IMR-90 (cell line): ENCODE measurements at regions of chr6 and their contacts with region 1.

Region 1: GRCh38 chr6:127302728-127303660 is 36.3 kb downstream of the RNF146 start:
- DNase-seq: peak; percentile 48
- ATAC-seq: peak; percentile 34; the same call in 1 of the 2 replicates
- H3K4me3 ChIP-seq: no peak overlapping the region
- H3K27ac ChIP-seq: no peak overlapping the region
- H3K4me1 ChIP-seq: no peaks in the 10 kb centered on the region; the same call in none of the 2 replicates
- H3K27me3 ChIP-seq: no peaks in the 10 kb centered on the region
- CTCF ChIP-seq: peak; percentile 81
- POLR2A ChIP-seq: no peak
- RAD21 ChIP-seq: peak; percentile 69

Region 2: DNA sequence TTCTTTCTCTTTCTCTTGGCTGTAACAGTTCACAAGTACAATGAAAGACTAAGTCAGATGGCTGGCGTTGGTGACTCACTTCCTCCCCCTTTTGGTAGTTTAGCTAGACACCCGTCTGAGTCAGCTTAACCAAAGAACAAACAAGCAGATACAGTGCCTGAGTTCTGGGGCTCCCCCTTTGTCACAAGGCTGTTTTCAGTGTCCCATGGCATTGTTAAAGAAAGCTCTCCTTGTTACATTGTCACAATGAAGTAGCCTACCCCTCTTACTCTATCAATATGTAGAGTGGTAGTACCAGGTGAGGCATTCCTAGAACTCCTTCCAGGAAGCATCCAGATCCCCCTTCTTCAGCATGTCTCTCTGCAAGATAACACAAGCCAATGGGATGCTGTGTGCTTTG is 117.6 kb after region 1 on chr6:
- CTCF ChIA-PET with region 1: no interaction called
- POLR2A ChIA-PET with region 1: no interaction called
- dilution Hi-C with region 1: no loop called
- in situ Hi-C with region 1: no loop called
- intact Hi-C with region 1: loop called (anchors 1 kb)
- DNase-seq: peak; percentile 97
- ATAC-seq: peak; percentile 98
- H3K4me3 ChIP-seq: no peak overlapping the region
- H3K27ac ChIP-seq: no peak overlapping the region
- H3K4me1 ChIP-seq: peaks cover 3% of the 10 kb centered on the region; the same call in 1 of the 2 replicates
- H3K27me3 ChIP-seq: no peaks in the 10 kb centered on the region
- CTCF ChIP-seq: peak; percentile 55
- POLR2A ChIP-seq: no peak
- RAD21 ChIP-seq: peak; percentile 53

Region 3: GRCh38 chr6:127464881-127465459 is 162.0 kb after region 1 on chr6:
- CTCF ChIA-PET with region 1: no interaction called
- POLR2A ChIA-PET with region 1: no interaction called
- dilution Hi-C with region 1: no loop called
- in situ Hi-C with region 1: loop called (anchors 10 kb)
- intact Hi-C with region 1: loop called (anchors 2 kb)
- DNase-seq: peak; percentile 78
- ATAC-seq: peak; percentile 88
- H3K4me3 ChIP-seq: no peak overlapping the region
- H3K27ac ChIP-seq: no peak overlapping the region
- H3K4me1 ChIP-seq: peaks cover 4% of the 10 kb centered on the region; the same call in 1 of the 2 replicates
- H3K27me3 ChIP-seq: no peaks in the 10 kb centered on the region
- CTCF ChIP-seq: peak; percentile 88
- POLR2A ChIP-seq: no peak
- RAD21 ChIP-seq: peak; percentile 79